ENCODE measurements at regions of chr16 and their contacts with region 1.

Region 1: DNA sequence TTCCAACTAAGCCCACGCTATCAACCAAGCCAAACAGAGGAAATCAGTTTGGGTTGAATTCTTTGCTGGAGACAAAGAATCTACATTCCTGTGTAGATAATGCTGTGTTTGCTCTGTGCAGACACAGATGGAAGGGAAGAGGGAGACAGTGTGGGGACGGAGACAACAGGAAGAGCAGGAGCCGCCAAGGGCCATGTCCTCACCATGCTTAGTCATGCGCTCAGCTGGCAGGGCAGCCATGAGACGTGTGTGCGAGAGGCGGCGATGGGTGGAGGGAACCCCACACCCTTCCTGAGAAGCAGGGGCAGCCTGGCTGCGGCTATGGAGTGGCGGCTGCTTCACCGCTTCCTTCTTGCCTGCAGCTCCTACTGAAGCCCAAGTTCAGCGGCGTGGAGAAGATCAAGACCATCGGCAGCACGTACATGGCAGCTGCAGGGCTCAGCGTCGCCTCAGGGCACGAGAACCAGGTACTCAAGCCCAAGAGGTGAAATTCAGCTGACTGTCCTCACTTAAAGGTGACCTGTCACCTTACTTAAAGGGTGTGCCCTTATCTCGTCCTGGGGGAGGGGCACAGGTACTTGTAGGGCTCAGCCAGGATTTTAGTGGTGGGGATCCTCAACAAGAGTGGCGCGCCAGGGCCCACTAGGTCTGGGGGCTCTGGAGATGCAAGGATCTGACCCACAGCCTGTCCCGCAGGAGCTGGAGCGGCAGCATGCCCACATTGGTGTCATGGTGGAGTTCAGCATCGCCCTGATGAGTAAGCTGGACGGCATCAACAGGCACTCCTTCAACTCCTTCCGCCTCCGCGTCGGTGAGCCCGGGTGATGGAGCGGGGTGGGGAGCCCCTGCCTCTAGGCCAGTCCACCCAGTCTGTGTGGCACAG is 47.5 kb downstream of the ADCY7 start:
- DNase-seq: peak; percentile 79
- H3K4me3 Mint-ChIP-seq: peak overlapping the region; percentile 22
- H3K27ac Mint-ChIP-seq: peak overlapping the region; percentile 77
- H3K4me1 Mint-ChIP-seq: peaks cover 54% of the 10 kb centered on the region
- H3K27me3 Mint-ChIP-seq: no peaks in the 10 kb centered on the region

Region 2: GRCh38 chr16:50273681-50274325 is 40.0 kb before region 1 on chr16:
- CTCF ChIA-PET with region 1: no interaction called
- POLR2A ChIA-PET with region 1: interaction called, 20 read pairs
- DNase-seq: peak; percentile 60
- H3K4me3 Mint-ChIP-seq: peak overlapping the region; percentile 88
- H3K27ac Mint-ChIP-seq: peak overlapping the region; percentile 98
- H3K4me1 Mint-ChIP-seq: peaks cover 98% of the 10 kb centered on the region
- H3K27me3 Mint-ChIP-seq: no peaks in the 10 kb centered on the region

Region 3: DNA sequence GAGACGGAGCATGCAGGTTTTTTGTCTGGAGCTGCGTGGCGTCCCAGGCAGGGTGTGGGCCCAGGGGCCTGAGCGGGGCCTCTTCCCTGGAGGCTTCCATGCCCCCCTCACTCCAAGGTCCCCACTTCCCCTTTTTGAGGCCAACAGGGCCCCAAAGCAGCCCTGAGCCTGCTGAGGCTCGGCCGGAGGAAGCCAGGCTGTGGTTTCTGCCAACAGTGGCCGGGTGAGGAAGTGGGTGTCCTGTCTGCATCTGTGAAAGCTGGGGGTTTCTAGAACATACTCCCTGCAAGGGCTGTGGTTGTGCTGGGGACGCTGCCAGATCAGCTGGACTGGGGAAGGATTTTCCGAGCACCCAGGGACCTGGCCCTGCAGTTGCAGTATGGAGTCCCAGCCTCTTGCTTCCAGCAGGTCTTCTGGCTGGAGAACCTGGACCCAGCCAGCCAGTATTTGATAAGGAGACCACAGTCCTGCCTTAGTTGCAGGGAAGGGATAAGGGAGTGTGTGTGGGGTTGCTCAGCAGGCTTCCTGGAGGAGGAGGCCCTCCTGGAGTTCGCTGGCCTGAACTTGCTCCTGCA is 31.8 kb before region 1 on chr16:
- CTCF ChIA-PET with region 1: interaction called, 5 read pairs
- POLR2A ChIA-PET with region 1: interaction called, 12 read pairs
- DNase-seq: peak; percentile 82
- H3K4me3 Mint-ChIP-seq: peak overlapping the region; percentile 64
- H3K27ac Mint-ChIP-seq: peak overlapping the region; percentile 77
- H3K4me1 Mint-ChIP-seq: peaks cover 90% of the 10 kb centered on the region
- H3K27me3 Mint-ChIP-seq: no peaks in the 10 kb centered on the region

Region 4: GRCh38 chr16:50302472-50303385 is 11.1 kb before region 1 on chr16:
- CTCF ChIA-PET with region 1: no interaction called
- POLR2A ChIA-PET with region 1: no interaction called
- DNase-seq: no peak
- H3K4me3 Mint-ChIP-seq: no peak overlapping the region
- H3K27ac Mint-ChIP-seq: no peak overlapping the region
- H3K4me1 Mint-ChIP-seq: peaks cover 2% of the 10 kb centered on the region
- H3K27me3 Mint-ChIP-seq: no peaks in the 10 kb centered on the region

Measured in activated CD4-positive, alpha-beta memory T cell treated with anti-CD3 and anti-CD28 coated beads, Interleukin-2, amount 10 ng/mL, durations not matched to agents 7 days and 5 days (primary cell).